MCF 10A (cell line): ENCODE measurements at regions of chr17 and their contacts with region 1.

Region 1: DNA sequence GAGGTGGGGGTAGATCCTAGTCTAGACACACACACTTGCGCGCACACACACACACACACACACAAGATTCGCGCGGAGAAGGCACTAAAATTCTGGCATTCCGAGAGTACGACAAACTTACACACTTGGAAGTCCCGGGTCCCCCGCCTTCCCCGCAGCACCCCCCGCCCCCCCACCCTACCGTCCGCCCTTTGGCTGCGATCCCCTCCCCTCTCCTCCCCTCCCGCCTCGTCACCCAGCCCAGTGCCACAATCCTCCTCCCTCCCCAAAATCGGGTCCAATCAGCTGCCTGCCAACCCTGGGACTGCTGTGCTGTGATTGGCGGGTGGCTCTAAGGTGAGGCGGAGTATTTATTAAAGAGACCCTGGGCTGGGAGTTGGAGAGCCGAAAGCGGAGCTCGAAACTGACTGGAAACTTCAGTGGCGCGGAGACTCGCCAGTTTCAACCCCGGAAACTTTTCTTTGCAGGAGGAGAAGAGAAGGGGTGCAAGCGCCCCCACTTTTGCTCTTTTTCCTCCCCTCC is at the start of gene SOX9:
- DNase-seq: peak; percentile 95
- H3K4me3 Mint-ChIP-seq: peak within 1 kb of the TSS; percentile 97
- H3K27ac Mint-ChIP-seq: peak within 1 kb of the TSS; percentile 46
- H3K4me1 Mint-ChIP-seq: peaks cover 24% of the 10 kb centered on the region
- H3K27me3 Mint-ChIP-seq: no peaks in the 10 kb centered on the region
- CTCF ChIP-seq: no peak
- total RNA-seq, gene SOX9: 2.6 and 4.5 TPM in 2 replicates

Region 2: DNA sequence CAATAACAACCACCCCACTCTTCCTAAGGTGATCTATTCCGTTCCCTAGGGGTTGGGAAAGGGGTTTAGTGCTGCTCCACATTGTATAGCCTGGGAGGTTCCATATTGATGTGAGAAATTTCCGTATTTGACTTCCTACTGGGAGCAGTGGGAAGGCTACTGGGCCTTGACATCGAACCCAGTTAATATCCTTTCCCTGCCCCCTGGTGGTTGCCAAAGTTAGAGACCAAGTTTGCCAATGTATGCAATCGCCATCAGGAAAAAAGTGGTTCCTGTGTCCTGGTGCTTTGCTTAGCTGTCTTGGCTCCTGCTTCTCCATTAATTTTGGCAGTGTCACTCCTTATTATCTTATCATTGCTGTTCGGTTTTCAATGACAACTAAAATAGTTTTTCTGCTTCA is 1036.5 kb before region 1 on chr17:
- CTCF ChIA-PET with region 1: no interaction called
- POLR2A ChIA-PET with region 1: no interaction called
- intact Hi-C with region 1: loop called (anchors 1 kb)
- DNase-seq: peak; percentile 76
- H3K4me3 Mint-ChIP-seq: no peak overlapping the region
- H3K27ac Mint-ChIP-seq: no peak overlapping the region
- H3K4me1 Mint-ChIP-seq: no peaks in the 10 kb centered on the region
- H3K27me3 Mint-ChIP-seq: no peaks in the 10 kb centered on the region
- CTCF ChIP-seq: peak; percentile 55

Region 3: GRCh38 chr17:71472809-71473789 is 647.6 kb before region 1 on chr17:
- CTCF ChIA-PET with region 1: interaction called, 7 read pairs
- POLR2A ChIA-PET with region 1: interaction called, 6 read pairs
- intact Hi-C with region 1: loop called (anchors 2 kb)
- DNase-seq: peak; percentile 73
- H3K4me3 Mint-ChIP-seq: no peak overlapping the region
- H3K27ac Mint-ChIP-seq: no peak overlapping the region
- H3K4me1 Mint-ChIP-seq: peaks cover 5% of the 10 kb centered on the region
- H3K27me3 Mint-ChIP-seq: no peaks in the 10 kb centered on the region
- CTCF ChIP-seq: peak; percentile 63

Region 4: DNA sequence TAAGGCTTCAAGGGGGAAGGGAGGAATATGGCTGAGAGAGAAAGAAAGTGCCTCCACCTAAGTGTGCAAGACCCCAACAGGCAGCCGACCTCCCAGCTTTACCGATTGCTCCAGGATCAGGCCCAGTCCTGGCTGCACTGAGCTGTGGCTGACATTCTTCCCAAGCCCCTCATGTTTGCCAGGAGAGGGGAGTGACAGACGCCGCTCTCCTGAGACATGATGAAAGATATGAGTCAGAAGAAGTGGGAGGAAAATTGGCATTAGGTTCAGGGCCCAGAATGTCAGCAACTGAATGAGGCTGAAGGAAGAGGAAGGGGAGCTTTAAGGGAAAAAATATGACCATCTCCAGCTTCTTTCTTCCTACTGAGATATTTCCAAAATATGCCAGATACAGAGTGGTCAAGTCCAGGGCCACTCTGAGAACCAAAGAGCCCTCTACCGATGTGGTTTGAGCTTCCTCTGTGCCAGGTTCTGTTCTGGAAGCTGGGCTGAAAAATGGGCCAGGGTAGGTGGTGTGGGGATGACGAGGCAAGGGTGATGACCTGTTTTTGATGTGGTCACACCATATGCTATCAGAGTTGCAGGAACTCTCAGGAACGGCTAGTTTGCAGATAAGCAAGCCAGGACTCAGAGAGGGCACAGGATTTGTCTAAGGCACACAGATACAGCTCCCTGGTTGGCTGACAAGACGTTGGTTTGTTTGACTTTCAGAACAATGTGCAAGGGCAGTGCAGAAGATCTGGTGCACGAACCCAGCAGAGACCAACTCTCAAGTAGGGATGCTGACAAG is 176.8 kb after region 1 on chr17:
- CTCF ChIA-PET with region 1: no interaction called
- POLR2A ChIA-PET with region 1: no interaction called
- intact Hi-C with region 1: loop called (anchors 1 kb)
- DNase-seq: peak; percentile 91
- H3K4me3 Mint-ChIP-seq: peak overlapping the region; percentile 37
- H3K27ac Mint-ChIP-seq: no peak overlapping the region
- H3K4me1 Mint-ChIP-seq: peaks cover 20% of the 10 kb centered on the region
- H3K27me3 Mint-ChIP-seq: no peaks in the 10 kb centered on the region
- CTCF ChIP-seq: no peak

Region 5: GRCh38 chr17:72421128-72422092 is 300.7 kb after region 1 on chr17:
- CTCF ChIA-PET with region 1: no interaction called
- POLR2A ChIA-PET with region 1: no interaction called
- intact Hi-C with region 1: loop called (anchors 2 kb)
- DNase-seq: peak; percentile 99
- H3K4me3 Mint-ChIP-seq: no peak overlapping the region
- H3K27ac Mint-ChIP-seq: peak overlapping the region; percentile 57
- H3K4me1 Mint-ChIP-seq: peaks cover 61% of the 10 kb centered on the region
- H3K27me3 Mint-ChIP-seq: no peaks in the 10 kb centered on the region
- CTCF ChIP-seq: no peak